Esophagus squamous epithelium (tissue), 5 donors: ENCODE measurements at regions of chr5 and their contacts with region 1.

Region 1: DNA sequence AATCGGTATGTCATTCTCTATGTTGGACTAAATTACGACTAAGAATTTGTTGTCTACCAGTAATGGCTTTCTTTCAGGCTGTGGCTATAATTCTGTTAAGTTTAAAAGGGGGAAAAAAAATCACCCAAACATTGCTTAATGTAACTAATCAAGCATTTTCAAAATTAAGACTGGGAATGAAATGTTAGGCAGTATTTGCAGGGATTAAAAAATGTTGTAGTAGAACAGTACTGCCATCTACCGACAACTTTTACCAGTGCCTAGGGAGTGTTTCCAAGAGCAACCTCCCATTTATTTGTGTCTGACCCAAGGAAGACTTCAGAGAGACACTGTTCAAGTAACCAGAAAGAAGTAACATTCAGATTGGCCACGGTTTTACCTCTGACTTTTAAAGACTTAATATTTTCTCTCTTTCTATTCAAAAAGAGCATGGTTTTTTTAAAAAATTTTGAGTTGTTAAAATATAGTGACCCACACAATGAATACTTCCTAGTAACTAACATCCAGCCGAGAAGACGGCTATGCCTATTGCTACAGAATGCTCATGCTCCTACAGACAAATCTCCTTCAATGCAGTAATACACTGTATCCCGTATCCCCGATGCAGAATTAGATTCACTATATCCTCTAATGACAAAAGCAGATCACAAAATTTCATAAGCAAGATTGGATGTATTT is 92.4 kb downstream of the ARL15 start:
- DNase-seq: no peak
- H3K4me3 ChIP-seq: no peak overlapping the region
- H3K27ac ChIP-seq: no peak overlapping the region
- H3K4me1 ChIP-seq: no peaks in the 10 kb centered on the region
- H3K27me3 ChIP-seq: no peaks in the 10 kb centered on the region
- CTCF ChIP-seq: peak; percentile 50 to 82 (median 68)
- POLR2A ChIP-seq: no peak

Region 2: DNA sequence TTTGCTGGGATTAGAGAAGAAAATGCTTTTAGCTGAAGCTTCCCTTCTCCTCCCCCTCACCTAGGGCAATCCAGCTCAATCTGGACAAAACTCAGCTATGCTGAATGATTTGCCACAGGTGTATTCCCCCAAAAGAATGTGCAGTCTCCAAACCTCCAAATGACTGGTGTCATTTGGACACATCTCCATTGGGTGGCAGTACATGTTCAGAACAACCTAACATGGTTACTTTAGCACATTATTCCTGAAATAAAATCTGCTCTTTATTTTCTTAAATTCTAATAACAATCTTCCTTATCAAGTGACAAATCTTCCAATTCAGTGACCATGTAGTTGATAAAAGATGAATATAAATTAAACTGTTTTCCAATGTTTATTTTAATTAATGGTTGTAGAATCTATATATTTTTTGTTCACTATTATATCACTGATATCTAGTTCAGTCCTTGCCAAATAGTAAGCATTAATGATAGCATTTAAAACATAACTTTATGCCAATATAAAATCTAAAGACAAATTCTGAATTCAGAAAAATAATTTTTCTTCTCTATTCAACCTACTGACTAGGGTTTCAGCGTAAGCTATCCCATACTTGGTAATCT is 1047.1 kb before region 1 on chr5:
- intact Hi-C with region 1: loop called (anchors 5 kb)
- DNase-seq: no peak
- H3K4me3 ChIP-seq: no peak overlapping the region
- H3K27ac ChIP-seq: no peak overlapping the region
- H3K4me1 ChIP-seq: peaks cover 0 to 31% (median 6%) of the 10 kb centered on the region in 3 donors
- H3K27me3 ChIP-seq: no peaks in the 10 kb centered on the region
- CTCF ChIP-seq: peak in 5 of 6 experiments; percentile 24 to 68 (median 52)
- POLR2A ChIP-seq: no peak

Region 3: DNA sequence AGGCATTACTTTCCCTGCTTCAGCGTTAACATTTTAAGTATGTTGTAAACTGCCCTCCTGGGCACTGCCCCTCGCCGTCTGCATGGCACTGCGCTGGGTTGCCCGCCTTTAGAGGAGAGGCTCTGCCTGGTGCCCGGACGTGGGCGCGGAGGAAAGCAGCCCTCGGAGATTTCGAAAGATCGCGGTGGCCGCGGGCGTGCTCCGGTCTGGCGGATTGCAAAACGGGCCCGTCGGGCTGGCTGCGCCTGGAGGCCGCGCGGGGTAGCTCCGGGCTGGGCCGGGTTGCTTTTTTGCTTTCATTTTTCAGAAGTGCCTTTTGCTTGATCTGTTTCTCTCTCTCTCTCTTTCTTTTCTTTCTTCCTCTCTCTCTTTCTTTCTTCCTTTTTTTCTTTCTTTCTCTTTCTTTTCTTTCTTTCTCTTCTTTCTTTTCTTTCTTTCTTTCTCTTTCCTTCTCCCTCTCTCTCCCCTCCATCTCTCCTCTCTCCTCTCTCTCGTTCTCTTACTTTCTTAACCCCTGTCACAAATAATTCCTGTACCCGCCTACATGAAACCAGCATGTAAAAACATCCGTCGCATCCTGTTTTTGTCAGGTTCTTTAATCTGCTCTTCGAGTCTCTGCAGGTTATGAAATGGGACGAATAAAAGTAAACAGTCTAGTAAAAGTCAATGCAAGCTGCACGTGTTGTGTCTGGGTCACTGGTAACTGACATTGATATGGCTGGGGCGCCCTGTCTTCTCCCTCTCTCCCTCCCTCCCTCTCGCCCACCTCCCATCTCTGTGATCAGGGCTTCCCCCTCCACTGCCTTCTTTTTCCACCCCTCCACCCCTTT is 735.9 kb before region 1 on chr5:
- intact Hi-C with region 1: loop called (anchors 5 kb)
- DNase-seq: no peak
- H3K4me3 ChIP-seq: peak overlapping the region; percentile 39 to 78 (median 68)
- H3K27ac ChIP-seq: peak overlapping the region; percentile 35 to 83 (median 72)
- H3K4me1 ChIP-seq: peaks cover 11 to 53% (median 22%) of the 10 kb centered on the region in 3 donors
- H3K27me3 ChIP-seq: peaks cover 0 to 42% (median 0%) of the 10 kb centered on the region in 4 donors
- CTCF ChIP-seq: peak in 4 of 6 experiments; percentile 20 to 50 (median 41)
- POLR2A ChIP-seq: no peak

Region 4: GRCh38 chr5:54547711-54548250 is 329.8 kb after region 1 on chr5:
- intact Hi-C with region 1: no loop called
- DNase-seq: no peak
- H3K4me3 ChIP-seq: no peak overlapping the region
- H3K27ac ChIP-seq: peak overlapping the region in 1 of 4 donors; percentile 30
- H3K4me1 ChIP-seq: peaks cover 0 to 30% (median 8%) of the 10 kb centered on the region in 3 donors
- H3K27me3 ChIP-seq: no peaks in the 10 kb centered on the region
- CTCF ChIP-seq: no peak
- POLR2A ChIP-seq: no peak